Posterior cingulate gyrus (tissue), 11 donors: ENCODE measurements at regions of chr22 and their contacts with region 1.

Region 1: DNA sequence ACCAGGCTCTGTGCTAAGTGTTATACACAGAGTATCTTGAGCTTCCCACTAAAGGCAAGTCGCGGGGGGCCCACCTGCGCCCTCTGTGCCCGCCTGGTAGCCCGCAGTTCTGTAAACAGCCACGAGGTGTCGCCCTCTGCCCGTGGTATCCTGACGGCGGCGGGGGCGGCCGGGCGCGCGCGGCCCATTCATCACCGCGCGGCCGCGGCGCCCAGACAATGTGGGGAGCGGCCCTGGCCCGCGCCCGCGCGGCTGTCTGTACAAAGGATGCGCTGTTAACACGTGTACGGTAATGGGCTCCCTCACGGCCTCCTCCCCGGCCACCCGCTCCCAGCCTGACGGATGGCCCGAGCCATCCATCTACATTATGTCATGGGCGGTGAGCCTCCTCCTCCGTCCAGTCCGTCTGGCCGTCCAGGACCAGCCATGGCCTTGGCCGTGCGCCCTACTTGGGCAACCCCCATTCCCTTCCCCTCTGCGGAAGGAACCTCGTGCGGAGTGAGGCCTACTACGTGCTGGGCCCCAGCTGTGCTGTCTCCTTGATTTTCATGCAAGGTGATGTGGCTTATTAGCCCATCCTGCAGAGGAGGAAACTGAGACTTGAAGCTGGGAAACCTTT is 99.4 kb downstream of the MIAT start:
- DNase-seq: peak in 9 of 10 donors; percentile 40 to 94 (median 66)

Region 2: GRCh38 chr22:27885977-27886842 is 1129.4 kb after region 1 on chr22:
- intact Hi-C with region 1: loop called (anchors 5 kb)
- DNase-seq: peak in 5 of 10 donors; percentile 15 to 61 (median 51)

Region 3: GRCh38 chr22:28009272-28009827 is 1252.6 kb after region 1 on chr22:
- intact Hi-C with region 1: loop called (anchors 2 kb)
- DNase-seq: peak; percentile 69 to 97 (median 82)